Cardiac septum (tissue), 1 donor: ENCODE measurements at regions of chr1 and their contacts with region 1.

Region 1: GRCh38 chr1:170483051-170483450 is 48.9 kb upstream of the GORAB start:
- DNase-seq: no peak

Region 2: GRCh38 chr1:170461762-170462384 is 21.2 kb before region 1 on chr1:
- intact Hi-C with region 1: loop called (anchors 2 kb)
- DNase-seq: peak; percentile 60